H1 (cell line): ENCODE measurements at regions of chr10 and their contacts with region 1.

Region 1: DNA sequence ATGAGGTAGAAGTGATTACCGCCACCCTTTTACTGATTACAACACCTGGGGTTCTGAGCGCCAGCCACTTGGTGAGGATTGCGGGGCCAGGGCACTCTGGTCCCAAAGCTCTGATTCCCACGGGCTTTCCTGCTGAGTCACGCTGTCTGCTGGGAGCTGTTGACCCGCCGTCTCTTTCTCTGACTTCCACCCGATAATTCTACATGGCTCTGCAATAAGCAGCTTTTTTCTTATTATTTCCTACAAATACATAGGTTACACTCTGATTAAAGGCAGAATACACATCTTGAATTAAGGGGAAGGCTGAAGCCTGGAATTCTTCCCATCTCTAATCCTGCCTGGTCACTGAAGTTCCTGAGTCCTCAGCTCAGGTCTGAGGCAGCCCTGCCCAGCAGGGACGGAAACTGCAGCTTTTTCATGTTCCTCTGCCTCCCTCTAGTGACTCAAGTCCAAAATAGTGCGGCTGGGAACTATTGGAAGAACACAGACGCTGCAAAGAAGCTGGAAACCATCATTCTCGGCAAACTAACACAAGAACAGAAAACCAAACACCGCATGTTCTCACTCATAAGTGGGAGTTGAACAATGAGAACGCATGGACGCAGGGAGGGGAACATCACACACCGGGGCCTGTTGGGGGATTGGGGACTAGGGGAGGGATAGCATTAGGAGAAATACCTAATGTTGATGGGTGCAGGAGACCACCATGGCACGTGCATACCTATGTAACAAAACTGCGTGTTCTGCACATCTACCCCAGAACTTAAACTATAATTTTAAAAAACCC is 178.3 kb downstream of the PRKCQ start:
- DNase-seq: peak; percentile 57 to 65
- H3K4me3 ChIP-seq: peak overlapping the region in 1 of 4 experiments; percentile 44; a peak in 2 of 8 replicates
- H3K27ac ChIP-seq: no peak overlapping the region
- H3K4me1 ChIP-seq: no peaks in the 10 kb centered on the region; a peak in 2 of 7 replicates
- H3K27me3 ChIP-seq: no peaks in the 10 kb centered on the region
- CTCF ChIP-seq: peak; percentile 55 to 88 (median 80)
- EP300 ChIP-seq: no peak
- POLR2A ChIP-seq: no peak
- RAD21 ChIP-seq: peak; percentile 93 to 96

Region 2: DNA sequence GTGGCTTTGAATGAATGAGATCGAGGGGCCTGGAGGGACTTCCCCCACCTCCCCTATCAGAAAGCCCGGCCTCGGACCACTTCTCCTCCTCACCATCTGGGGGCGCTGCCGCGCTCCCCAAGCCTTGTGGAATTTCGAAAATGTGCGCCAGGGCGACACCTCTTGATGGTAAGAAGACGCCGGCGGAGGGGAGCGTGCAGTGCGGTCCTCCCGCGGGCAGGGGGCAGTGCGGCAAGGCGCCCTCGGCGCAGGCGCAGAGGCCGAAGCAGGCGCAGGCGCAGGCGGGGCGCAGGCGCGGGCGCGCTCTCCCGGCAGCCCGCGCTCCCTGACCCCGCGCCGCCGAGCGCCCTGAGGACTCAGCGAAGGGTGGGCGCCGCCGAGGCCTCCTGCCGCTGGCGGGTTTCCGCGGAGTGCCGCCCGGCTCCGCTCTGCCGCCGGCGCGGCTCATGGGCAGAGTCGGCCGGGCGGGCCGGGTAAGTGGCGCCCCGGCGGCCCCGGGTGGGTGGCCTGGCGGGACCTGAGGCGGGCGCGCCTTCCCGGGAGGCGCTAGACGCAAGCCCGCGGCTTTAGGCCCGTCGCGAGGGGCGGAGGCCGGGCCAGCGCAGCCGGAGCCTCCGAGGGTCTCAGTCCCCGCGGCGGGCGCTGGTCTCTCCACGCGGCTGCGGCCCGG is 312.9 kb before region 1 on chr10 and contains the start of gene RBM17:
- CTCF ChIA-PET with region 1: interaction called, 16 read pairs
- POLR2A ChIA-PET with region 1: no interaction called
- DNase-seq: peak; percentile 95 to 100
- H3K4me3 ChIP-seq: peak within 1 kb of the TSS; percentile 88 to 94 (median 92)
- H3K27ac ChIP-seq: peak within 1 kb of the TSS; percentile 74; the same call in 1 of the 2 replicates
- H3K4me1 ChIP-seq: peaks cover 0 to 12% (median 7%) of the 10 kb centered on the region in 4 experiments; a peak in 4 of 7 replicates
- H3K27me3 ChIP-seq: no peaks in the 10 kb centered on the region
- CTCF ChIP-seq: peak; percentile 100
- EP300 ChIP-seq: 0 out of 3 replicates have a peak, but pooled peaks of 1 of the 2 experiments have one; percentile 80
- POLR2A ChIP-seq: peak in 1 of 2 experiments; percentile 69; a peak in 2 of 3 replicates
- RAD21 ChIP-seq: peak; percentile 71 to 80
- total RNA-seq, gene RBM17: 120 and 128 TPM in 2 replicates

Region 3: GRCh38 chr10:6151087-6151977 is 250.4 kb before region 1 on chr10:
- CTCF ChIA-PET with region 1: interaction called, 14 read pairs
- POLR2A ChIA-PET with region 1: interaction called, 3 read pairs
- DNase-seq: peak; percentile 61 to 81
- H3K4me3 ChIP-seq: peak overlapping the region in 1 of 4 experiments; percentile 26; a peak in 2 of 8 replicates
- H3K27ac ChIP-seq: no peak overlapping the region
- H3K4me1 ChIP-seq: peaks cover 0 to 5% (median 4%) of the 10 kb centered on the region in 4 experiments; a peak in 6 of 7 replicates
- H3K27me3 ChIP-seq: no peaks in the 10 kb centered on the region
- CTCF ChIP-seq: peak; percentile 68 to 87 (median 76)
- EP300 ChIP-seq: no peak
- POLR2A ChIP-seq: no peak
- RAD21 ChIP-seq: peak; percentile 54 to 58

Region 4: GRCh38 chr10:6202684-6203330 is 198.9 kb before region 1 on chr10 and contains the start of gene PFKFB3:
- CTCF ChIA-PET with region 1: interaction called, 56 read pairs
- POLR2A ChIA-PET with region 1: interaction called, 66 read pairs
- DNase-seq: peak; percentile 82 to 99
- H3K4me3 ChIP-seq: peak within 1 kb of the TSS; percentile 63 to 92 (median 80)
- H3K27ac ChIP-seq: peak within 1 kb of the TSS; percentile 91
- H3K4me1 ChIP-seq: peaks cover 3 to 10% (median 7%) of the 10 kb centered on the region in 4 experiments
- H3K27me3 ChIP-seq: peaks cover 19 to 37% (median 33%) of the 10 kb centered on the region in 4 experiments; a peak in 6 of 7 replicates
- CTCF ChIP-seq: peak; percentile 85 to 91 (median 88)
- EP300 ChIP-seq: peak in 1 of 2 experiments; percentile 77; a peak in 1 of 3 replicates
- POLR2A ChIP-seq: peak; percentile 100
- RAD21 ChIP-seq: peak; percentile 72 to 78
- total RNA-seq, gene PFKFB3: 27.3 and 32.0 TPM in 2 replicates

Region 5: GRCh38 chr10:6232846-6233724 is 168.7 kb before region 1 on chr10:
- CTCF ChIA-PET with region 1: interaction called, 38 read pairs
- POLR2A ChIA-PET with region 1: no interaction called
- DNase-seq: no peak
- H3K4me3 ChIP-seq: no peak overlapping the region
- H3K27ac ChIP-seq: no peak overlapping the region
- H3K4me1 ChIP-seq: no peaks in the 10 kb centered on the region
- H3K27me3 ChIP-seq: no peaks in the 10 kb centered on the region
- CTCF ChIP-seq: no peak
- EP300 ChIP-seq: no peak
- POLR2A ChIP-seq: no peak
- RAD21 ChIP-seq: no peak

Region 6: DNA sequence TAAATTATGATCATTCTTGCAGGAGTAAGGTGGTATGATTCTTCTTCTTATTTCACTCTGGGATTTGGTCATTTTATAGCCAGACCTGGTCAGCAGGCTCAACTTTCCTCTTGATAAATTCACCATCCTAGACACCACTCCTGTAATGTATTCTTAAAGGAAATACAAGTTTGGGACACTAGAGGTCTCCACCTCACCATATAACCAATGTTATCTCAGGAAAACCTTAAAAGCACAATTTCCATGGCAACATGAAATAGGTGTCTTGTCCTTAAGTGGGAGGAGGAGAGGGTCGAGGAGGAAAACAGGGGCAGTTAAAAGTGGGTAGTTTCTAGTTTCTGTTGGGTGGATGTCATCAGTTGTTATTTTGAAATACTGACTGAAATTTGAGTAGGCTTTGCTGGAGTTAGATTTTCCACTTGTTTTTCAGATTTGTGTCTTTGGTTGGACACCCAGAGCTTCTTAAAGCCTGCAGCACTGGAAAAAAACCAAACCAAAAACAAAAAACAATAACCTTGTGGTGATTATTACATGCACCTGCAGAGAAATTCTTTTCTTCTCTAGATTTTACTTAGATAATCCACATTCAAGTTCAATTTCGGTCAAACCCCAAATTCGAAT is 15.2 kb after region 1 on chr10:
- CTCF ChIA-PET with region 1: interaction called, 15 read pairs
- POLR2A ChIA-PET with region 1: interaction called, 3 read pairs
- DNase-seq: no peak
- H3K4me3 ChIP-seq: no peak overlapping the region
- H3K27ac ChIP-seq: no peak overlapping the region
- H3K4me1 ChIP-seq: no peaks in the 10 kb centered on the region; a peak in 1 of 7 replicates
- H3K27me3 ChIP-seq: no peaks in the 10 kb centered on the region
- CTCF ChIP-seq: peak in 2 of 3 experiments; percentile 65 to 69; a peak in 2 of 4 replicates
- EP300 ChIP-seq: no peak
- POLR2A ChIP-seq: no peak
- RAD21 ChIP-seq: peak; percentile 87 to 88

Region 7: DNA sequence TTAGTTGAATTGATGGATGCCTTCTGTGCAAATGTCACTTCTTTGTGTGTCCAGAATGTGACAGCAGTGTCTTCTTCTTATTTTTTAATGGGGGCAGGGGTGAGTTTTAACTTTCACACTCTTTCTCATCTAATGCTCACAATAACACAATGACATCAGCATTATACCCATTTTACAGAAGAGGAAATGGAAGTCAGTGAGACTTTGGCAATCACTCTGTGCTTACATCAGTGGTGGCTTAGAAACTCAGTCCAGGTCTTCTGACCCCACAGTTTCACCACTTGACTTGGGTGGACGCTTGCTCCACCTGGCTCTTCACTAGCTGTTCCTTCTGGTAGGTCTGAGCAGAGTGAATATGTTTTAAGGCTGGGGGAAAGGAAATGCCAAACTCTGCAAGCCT is 54.3 kb after region 1 on chr10:
- CTCF ChIA-PET with region 1: no interaction called
- POLR2A ChIA-PET with region 1: no interaction called
- DNase-seq: no peak
- H3K4me3 ChIP-seq: no peak overlapping the region
- H3K27ac ChIP-seq: no peak overlapping the region
- H3K4me1 ChIP-seq: no peaks in the 10 kb centered on the region
- H3K27me3 ChIP-seq: no peaks in the 10 kb centered on the region
- CTCF ChIP-seq: no peak
- EP300 ChIP-seq: no peak
- POLR2A ChIP-seq: no peak
- RAD21 ChIP-seq: no peak

Region 8: GRCh38 chr10:6482737-6483357 is 81.1 kb after region 1 on chr10:
- CTCF ChIA-PET with region 1: no interaction called
- POLR2A ChIA-PET with region 1: no interaction called
- DNase-seq: no peak
- H3K4me3 ChIP-seq: no peak overlapping the region
- H3K27ac ChIP-seq: no peak overlapping the region
- H3K4me1 ChIP-seq: no peaks in the 10 kb centered on the region; a peak in 1 of 7 replicates
- H3K27me3 ChIP-seq: no peaks in the 10 kb centered on the region
- CTCF ChIP-seq: no peak
- EP300 ChIP-seq: no peak
- POLR2A ChIP-seq: no peak
- RAD21 ChIP-seq: no peak

Region 9: GRCh38 chr10:6514844-6515780 is 113.4 kb after region 1 on chr10:
- CTCF ChIA-PET with region 1: no interaction called
- POLR2A ChIA-PET with region 1: no interaction called
- DNase-seq: no peak
- H3K4me3 ChIP-seq: no peak overlapping the region
- H3K27ac ChIP-seq: no peak overlapping the region
- H3K4me1 ChIP-seq: peaks cover 0 to 10% (median 0%) of the 10 kb centered on the region in 4 experiments; a peak in 1 of 7 replicates
- H3K27me3 ChIP-seq: no peaks in the 10 kb centered on the region
- CTCF ChIP-seq: no peak
- EP300 ChIP-seq: no peak
- POLR2A ChIP-seq: no peak
- RAD21 ChIP-seq: no peak